BJ (cell line): ENCODE measurements at regions of chr15 and their contacts with region 1.

Region 1: DNA sequence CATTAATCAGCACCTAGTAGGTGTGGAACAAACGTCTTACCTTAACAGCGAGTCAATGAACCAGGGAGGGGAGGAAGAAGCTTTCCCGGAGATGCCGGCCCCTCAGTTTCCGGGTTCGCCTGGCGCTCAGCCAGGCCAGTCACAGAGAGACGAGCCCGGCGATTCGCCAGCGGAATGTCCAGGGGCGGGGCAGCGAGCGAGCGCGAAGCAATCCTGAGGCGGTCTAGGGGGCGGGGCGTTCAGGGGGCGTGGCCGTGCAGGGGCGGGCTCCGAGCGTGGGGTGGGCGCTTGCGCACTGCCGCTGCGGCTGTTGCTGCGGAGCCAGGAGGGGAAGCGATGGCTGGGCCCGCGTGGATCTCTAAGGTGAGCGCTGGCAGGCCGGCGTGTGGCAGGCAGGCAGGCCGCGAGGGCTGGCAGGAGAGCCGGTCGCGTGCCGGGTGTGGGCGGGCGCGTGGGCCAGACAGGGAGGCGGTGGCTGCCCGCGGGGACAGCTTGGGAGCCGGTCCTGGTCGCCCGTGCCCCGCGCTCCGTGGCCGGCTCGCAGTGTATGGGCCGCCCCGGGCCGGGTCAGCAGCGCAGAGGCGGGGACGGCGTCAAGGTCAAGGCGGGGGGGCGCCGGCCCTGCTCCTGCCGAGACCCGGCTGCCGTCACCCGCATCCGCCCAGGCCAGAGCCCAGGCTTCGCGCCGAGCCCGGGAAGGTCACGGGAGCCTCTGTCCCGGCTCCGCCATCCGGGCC is at the start of gene IDH3A:
- DNase-seq: peak; percentile 59
- H3K4me3 ChIP-seq: peak within 1 kb of the TSS; percentile 63
- H3K27me3 ChIP-seq: no peaks in the 10 kb centered on the region
- CTCF ChIP-seq: no peak
- polyA plus RNA-seq, gene IDH3A: 49.3 and 76.1 TPM in 2 replicates

Region 2: DNA sequence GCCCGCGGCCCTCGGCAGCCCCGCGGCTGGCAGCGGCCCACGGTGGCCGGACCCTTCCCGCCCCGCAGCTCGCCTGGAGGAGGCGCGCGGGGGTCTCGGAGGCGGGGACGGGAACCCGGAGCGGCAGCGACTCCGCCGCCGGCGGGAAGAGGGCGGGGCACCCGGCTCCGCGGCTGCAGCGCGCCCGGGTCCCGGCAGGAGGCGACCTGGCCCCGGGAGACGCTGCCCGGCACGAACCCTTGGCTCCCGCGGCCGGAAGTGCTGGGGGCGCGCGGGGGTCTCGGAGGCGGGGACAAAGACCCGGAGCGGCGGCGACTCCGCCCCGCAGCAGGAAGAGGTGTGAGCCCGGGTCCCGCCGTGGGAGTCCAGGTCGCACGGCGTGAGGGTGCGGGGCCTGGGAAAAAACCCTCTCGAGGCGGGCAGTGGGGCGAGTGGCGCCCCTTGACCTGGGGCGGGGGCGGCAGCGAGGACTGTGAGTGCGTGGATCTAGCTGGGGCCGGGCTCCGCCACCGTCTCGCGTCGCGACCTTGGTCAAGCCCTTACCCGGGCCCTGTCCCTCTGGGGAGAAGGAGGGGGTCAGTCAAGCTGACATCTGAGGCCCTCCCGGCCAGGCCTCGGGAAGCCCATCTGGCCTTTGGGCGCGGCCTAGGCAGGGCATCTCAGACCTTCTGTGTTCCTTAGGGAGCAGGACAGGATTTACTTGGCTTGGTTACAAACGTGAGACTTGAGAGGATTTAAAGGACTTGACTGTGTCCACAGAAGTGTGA is 17.8 kb before region 1 on chr15 and contains the start of gene CIB2:
- CTCF ChIA-PET with region 1: interaction called, 22 read pairs
- POLR2A ChIA-PET with region 1: no interaction called
- DNase-seq: no peak
- H3K4me3 ChIP-seq: peak within 1 kb of the TSS; percentile 66
- H3K27me3 ChIP-seq: no peaks in the 10 kb centered on the region
- CTCF ChIP-seq: peak; percentile 28; the same call in 1 of the 2 replicates
- polyA plus RNA-seq, gene CIB2: 4.5 and 7.4 TPM in 2 replicates

Region 3: DNA sequence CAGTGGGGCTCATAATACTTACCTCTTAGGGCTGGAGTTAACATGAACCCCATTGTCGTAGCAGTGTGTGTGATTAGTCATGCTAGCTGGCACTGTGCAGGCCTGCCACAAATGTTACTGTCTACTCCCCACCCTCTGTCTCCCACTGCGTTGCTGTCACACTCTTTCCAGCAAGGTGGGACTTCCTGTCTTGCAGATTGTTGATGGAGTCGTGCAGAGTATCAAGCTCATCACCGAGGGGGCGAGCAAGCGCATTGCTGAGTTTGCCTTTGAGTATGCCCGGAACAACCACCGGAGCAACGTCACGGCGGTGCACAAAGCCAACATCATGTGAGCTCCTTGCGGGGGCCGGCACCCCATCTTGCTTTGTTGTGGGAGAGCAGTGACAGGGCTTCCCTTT is 12.8 kb after region 1 on chr15:
- CTCF ChIA-PET with region 1: no interaction called
- POLR2A ChIA-PET with region 1: no interaction called
- DNase-seq: no peak
- H3K4me3 ChIP-seq: no peak overlapping the region
- H3K27me3 ChIP-seq: no peaks in the 10 kb centered on the region
- CTCF ChIP-seq: no peak